AG04450 (cell line): ENCODE measurements at regions of chr15 and their contacts with region 1.

Region 1: DNA sequence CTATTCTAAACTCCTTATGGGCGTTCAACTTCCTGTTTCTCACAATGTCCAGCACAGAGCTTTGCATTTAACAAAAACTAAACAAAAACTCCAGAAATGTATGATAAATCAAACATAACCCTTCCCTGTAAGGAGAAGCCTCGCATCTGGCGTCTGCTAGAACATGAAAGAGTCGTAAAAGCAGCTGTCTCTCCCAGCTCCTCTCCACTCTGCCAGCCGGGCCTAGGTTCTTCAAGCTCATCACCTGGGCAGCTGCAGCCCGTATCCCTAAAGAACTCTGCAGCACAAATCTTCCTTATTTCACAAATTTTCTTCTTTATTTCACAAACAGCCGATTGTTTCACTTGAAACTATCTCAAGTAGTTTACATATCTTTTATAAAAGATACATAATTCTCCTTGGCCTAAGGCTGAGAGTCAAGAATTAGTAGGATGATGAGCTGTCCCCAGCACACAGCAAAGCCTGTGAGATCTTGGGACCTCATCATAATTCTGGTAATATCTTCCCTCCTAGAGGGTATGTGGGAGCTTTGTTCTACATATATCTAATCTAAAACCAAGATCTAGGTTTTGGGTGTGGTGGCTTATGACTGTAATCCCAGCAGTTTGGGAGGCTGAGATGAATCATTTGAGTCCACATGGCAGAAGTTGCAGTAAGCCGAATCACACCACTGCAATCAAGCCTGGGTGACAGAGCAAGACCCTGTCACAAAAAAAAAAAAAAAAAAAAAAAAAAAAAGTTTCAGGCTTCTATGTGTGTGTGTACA is 35.3 kb downstream of the ANXA2 start:
- DNase-seq: peak; percentile 33
- H3K4me3 ChIP-seq: no peak overlapping the region
- H3K27ac ChIP-seq: peak overlapping the region; percentile 79
- H3K27me3 ChIP-seq: no peaks in the 10 kb centered on the region
- CTCF ChIP-seq: no peak

Region 2: GRCh38 chr15:60052796-60053195 is 309.7 kb before region 1 on chr15:
- CTCF ChIA-PET with region 1: no interaction called
- POLR2A ChIA-PET with region 1: no interaction called
- DNase-seq: no peak
- H3K4me3 ChIP-seq: no peak overlapping the region
- H3K27ac ChIP-seq: no peak overlapping the region
- H3K27me3 ChIP-seq: peaks cover 2% of the 10 kb centered on the region
- CTCF ChIP-seq: no peak

Region 3: GRCh38 chr15:60374628-60375081 is 12.2 kb after region 1 on chr15:
- CTCF ChIA-PET with region 1: interaction called, 7 read pairs
- POLR2A ChIA-PET with region 1: interaction called, 14 read pairs
- DNase-seq: peak; percentile 93
- H3K4me3 ChIP-seq: no peak overlapping the region
- H3K27ac ChIP-seq: peak overlapping the region; percentile 97
- H3K27me3 ChIP-seq: no peaks in the 10 kb centered on the region
- CTCF ChIP-seq: no peak

Region 4: GRCh38 chr15:60397772-60398445 is 35.4 kb after region 1 on chr15 and contains the start of gene ANXA2:
- CTCF ChIA-PET with region 1: interaction called, 8 read pairs
- POLR2A ChIA-PET with region 1: interaction called, 38 read pairs
- DNase-seq: no peak
- H3K4me3 ChIP-seq: peak within 1 kb of the TSS; percentile 96
- H3K27ac ChIP-seq: peak within 1 kb of the TSS; percentile 97
- H3K27me3 ChIP-seq: no peaks in the 10 kb centered on the region
- CTCF ChIP-seq: no peak
- polyA plus RNA-seq, gene ANXA2: 4,288 and 4,537 TPM in 2 replicates

Region 5: GRCh38 chr15:60444289-60444912 is 81.9 kb after region 1 on chr15:
- CTCF ChIA-PET with region 1: interaction called, 111 read pairs
- POLR2A ChIA-PET with region 1: no interaction called
- DNase-seq: no peak
- H3K4me3 ChIP-seq: no peak overlapping the region
- H3K27ac ChIP-seq: no peak overlapping the region
- H3K27me3 ChIP-seq: no peaks in the 10 kb centered on the region
- CTCF ChIP-seq: peak; percentile 74

Region 6: DNA sequence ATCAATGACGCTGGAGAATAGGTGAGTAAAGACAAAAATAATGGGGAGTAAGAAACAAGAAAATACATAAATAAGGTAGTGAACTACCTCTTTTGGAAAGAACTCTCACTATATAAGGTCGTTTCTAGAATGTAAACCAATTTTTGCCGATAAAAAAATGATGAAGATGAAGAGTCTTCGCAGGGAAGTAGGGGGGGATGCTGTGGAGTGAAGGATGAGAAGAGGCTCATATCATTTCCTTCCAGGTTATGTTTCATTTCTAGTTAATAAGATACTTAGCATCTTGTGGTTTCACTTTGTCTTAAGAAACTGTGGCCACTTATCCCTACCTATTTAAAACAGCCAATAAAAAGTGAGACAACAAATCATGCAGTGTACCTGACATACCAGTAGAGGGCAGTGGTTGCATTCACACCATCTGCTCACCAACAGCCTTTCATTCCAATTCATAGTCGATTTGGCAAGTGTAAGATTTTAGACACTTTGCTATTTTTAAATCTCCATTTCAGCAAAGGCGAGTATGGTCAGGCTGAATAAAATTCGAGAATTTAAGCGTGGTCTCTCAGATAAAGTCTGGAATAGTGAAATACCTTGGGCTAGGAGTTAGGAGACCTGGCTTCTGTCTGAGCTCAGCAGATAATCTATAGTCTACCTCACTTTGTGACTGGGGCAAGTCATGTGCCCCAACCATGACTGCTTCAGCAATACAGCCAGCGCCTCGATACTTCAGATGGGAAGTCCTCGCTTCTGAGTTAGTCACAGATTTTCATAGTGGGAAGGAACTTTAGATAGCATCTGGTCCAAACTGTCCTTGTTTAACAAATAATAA is 145.3 kb after region 1 on chr15:
- CTCF ChIA-PET with region 1: interaction called, 10 read pairs
- POLR2A ChIA-PET with region 1: interaction called, 3 read pairs
- DNase-seq: peak; percentile 38
- H3K4me3 ChIP-seq: no peak overlapping the region
- H3K27ac ChIP-seq: no peak overlapping the region
- H3K27me3 ChIP-seq: no peaks in the 10 kb centered on the region
- CTCF ChIP-seq: peak; percentile 98